CD4-positive, alpha-beta T cell (primary cell): ENCODE measurements at regions of chr6 and their contacts with region 1.

Region 1: GRCh38 chr6:42297661-42298060 is 80.0 kb upstream of the MRPS10 start:
- DNase-seq: no peak
- ATAC-seq: no peak
- H3K4me3 ChIP-seq: no peak overlapping the region
- H3K4me3 Mint-ChIP-seq: no peak overlapping the region
- H3K27ac ChIP-seq: no peak overlapping the region
- H3K27ac Mint-ChIP-seq: no peak overlapping the region
- H3K4me1 ChIP-seq: peaks cover 42% of the 10 kb centered on the region
- H3K4me1 Mint-ChIP-seq: peaks cover 59% of the 10 kb centered on the region
- H3K27me3 ChIP-seq: no peaks in the 10 kb centered on the region
- H3K27me3 Mint-ChIP-seq: no peaks in the 10 kb centered on the region
- CTCF ChIP-seq: no peak

Region 2: GRCh38 chr6:42230345-42231321 is 67.0 kb before region 1 on chr6:
- CTCF ChIA-PET with region 1: no interaction called
- POLR2A ChIA-PET with region 1: no interaction called
- intact Hi-C with region 1: no loop called
- DNase-seq: no peak
- ATAC-seq: no peak
- H3K4me3 ChIP-seq: no peak overlapping the region
- H3K4me3 Mint-ChIP-seq: no peak overlapping the region
- H3K27ac ChIP-seq: no peak overlapping the region
- H3K27ac Mint-ChIP-seq: no peak overlapping the region
- H3K4me1 ChIP-seq: no peaks in the 10 kb centered on the region
- H3K4me1 Mint-ChIP-seq: no peaks in the 10 kb centered on the region
- H3K27me3 ChIP-seq: no peaks in the 10 kb centered on the region
- H3K27me3 Mint-ChIP-seq: no peaks in the 10 kb centered on the region
- CTCF ChIP-seq: no peak

Region 3: GRCh38 chr6:42260972-42261371 is 36.7 kb before region 1 on chr6:
- CTCF ChIA-PET with region 1: no interaction called
- POLR2A ChIA-PET with region 1: no interaction called
- intact Hi-C with region 1: loop called in 1 of 2 experiments (anchors 2 kb)
- DNase-seq: peak in 13 of 14 experiments; percentile 14 to 55 (median 26)
- ATAC-seq: peak; percentile 63
- H3K4me3 ChIP-seq: no peak overlapping the region
- H3K4me3 Mint-ChIP-seq: no peak overlapping the region
- H3K27ac ChIP-seq: no peak overlapping the region
- H3K27ac Mint-ChIP-seq: no peak overlapping the region
- H3K4me1 ChIP-seq: no peaks in the 10 kb centered on the region
- H3K4me1 Mint-ChIP-seq: peaks cover 7% of the 10 kb centered on the region
- H3K27me3 ChIP-seq: no peaks in the 10 kb centered on the region
- H3K27me3 Mint-ChIP-seq: no peaks in the 10 kb centered on the region
- CTCF ChIP-seq: peak; percentile 56

Region 4: DNA sequence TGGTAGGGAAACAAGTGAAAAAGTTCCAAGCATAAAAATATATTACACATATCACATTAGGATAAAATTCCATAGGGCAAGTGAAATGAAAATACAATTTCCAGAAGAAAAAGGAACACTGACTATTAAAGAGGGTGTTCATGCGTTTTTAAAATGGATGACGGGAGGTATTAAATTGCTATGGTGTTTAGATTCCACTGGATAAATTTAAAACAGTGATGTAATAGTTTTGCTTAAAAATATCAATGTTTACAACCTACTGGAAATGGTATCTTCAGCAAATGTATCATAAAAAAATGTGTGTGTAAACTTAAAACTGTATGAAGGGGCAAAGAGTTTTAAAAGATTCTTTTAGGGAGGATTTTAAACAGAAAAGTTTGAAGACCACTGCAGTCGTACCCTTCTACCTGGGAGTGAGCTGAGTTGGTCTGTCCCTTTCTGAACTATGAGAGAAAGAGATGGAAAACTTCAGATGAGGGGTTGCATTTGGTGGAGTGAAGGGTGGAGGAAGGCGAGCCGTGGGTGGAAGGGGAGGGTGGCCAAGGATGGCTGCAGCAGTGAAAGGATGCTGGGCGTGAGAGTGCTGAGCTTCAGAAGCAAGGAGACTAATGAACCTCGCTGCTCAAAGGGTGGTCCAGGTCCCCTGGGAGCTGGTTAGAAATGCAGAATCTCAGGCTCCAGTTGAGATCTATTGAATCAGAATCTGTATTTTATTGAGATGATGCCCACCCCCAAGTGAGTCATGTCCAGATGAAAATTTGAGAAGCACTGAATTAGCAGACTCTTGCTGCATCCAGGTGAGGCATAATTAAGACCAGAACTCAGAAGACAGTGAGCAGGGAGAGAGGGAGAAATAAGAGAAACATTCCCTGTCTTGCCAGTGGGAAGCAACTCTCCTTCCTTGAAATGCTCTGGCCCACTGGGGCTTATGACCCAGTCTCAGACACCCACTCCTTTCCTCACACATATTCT is 25.5 kb before region 1 on chr6:
- CTCF ChIA-PET with region 1: no interaction called
- POLR2A ChIA-PET with region 1: no interaction called
- intact Hi-C with region 1: no loop called
- DNase-seq: no peak
- ATAC-seq: no peak
- H3K4me3 ChIP-seq: no peak overlapping the region
- H3K4me3 Mint-ChIP-seq: no peak overlapping the region
- H3K27ac ChIP-seq: no peak overlapping the region
- H3K27ac Mint-ChIP-seq: no peak overlapping the region
- H3K4me1 ChIP-seq: no peaks in the 10 kb centered on the region
- H3K4me1 Mint-ChIP-seq: peaks cover 12% of the 10 kb centered on the region
- H3K27me3 ChIP-seq: no peaks in the 10 kb centered on the region
- H3K27me3 Mint-ChIP-seq: no peaks in the 10 kb centered on the region
- CTCF ChIP-seq: no peak

Region 5: DNA sequence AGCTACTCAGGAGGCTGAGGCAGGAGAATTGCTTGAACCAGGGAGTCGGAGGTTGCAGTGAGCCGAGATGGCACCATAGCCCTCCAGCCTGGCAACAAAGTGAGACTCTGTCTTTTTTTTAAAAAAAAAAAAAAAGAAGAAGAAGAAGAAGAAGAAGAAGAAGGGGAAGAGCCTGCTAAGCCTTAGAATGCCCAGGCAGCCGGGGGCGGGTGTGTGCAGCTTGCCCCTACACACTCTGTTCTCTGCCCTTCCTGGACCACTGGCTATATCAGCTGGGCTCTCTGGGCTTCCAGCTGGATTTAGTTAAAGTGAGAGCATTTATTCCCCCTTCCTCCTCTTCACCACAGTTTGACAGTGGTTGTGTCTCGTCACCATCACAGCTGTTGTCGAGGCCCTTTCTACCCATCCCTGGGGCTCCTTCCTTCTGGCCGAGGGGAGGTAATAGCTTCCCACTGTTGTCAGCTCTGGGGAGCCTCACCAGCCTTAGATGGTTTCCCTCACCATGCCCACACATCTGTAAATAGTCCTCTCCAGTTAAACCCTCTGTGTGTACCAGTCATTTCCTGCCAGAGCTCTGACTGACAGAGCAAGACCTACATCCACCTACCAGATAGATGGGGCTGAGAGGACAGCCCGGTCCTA is 76.5 kb after region 1 on chr6:
- CTCF ChIA-PET with region 1: no interaction called
- POLR2A ChIA-PET with region 1: no interaction called
- intact Hi-C with region 1: no loop called
- DNase-seq: peak in 2 of 14 experiments; percentile 42 to 64
- ATAC-seq: peak; percentile 67
- H3K4me3 ChIP-seq: no peak overlapping the region
- H3K4me3 Mint-ChIP-seq: peak overlapping the region; percentile 55
- H3K27ac ChIP-seq: peak overlapping the region in 1 of 2 donors; percentile 3
- H3K27ac Mint-ChIP-seq: peak overlapping the region; percentile 93
- H3K4me1 ChIP-seq: peaks cover 61% of the 10 kb centered on the region
- H3K4me1 Mint-ChIP-seq: peaks cover 67% of the 10 kb centered on the region
- H3K27me3 ChIP-seq: no peaks in the 10 kb centered on the region
- H3K27me3 Mint-ChIP-seq: no peaks in the 10 kb centered on the region
- CTCF ChIP-seq: no peak

Region 6: DNA sequence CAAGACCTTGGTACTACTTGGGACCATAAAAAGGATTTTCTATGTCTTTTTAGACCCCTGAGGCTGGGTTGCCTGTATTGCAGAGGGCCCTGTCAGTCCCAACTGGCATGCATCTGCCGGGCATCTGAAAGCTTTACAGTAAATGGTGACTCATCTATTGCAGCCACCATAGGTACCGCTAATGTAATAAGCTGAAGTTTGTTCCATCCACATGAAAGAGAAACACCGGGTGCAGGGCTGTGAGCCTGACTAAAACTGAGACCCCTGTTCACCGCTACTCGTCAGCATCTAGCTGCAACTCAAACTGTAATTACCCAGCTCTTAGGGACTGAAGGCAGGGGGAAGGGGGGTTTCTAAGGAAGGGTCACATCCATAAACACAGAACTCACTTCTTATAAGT is 104.5 kb after region 1 on chr6:
- CTCF ChIA-PET with region 1: no interaction called
- POLR2A ChIA-PET with region 1: no interaction called
- intact Hi-C with region 1: no loop called
- DNase-seq: peak in 6 of 14 experiments; percentile 8 to 52 (median 48)
- ATAC-seq: peak; percentile 47
- H3K4me3 ChIP-seq: no peak overlapping the region
- H3K4me3 Mint-ChIP-seq: no peak overlapping the region
- H3K27ac ChIP-seq: no peak overlapping the region
- H3K27ac Mint-ChIP-seq: peak overlapping the region; percentile 81
- H3K4me1 ChIP-seq: peaks cover 70% of the 10 kb centered on the region
- H3K4me1 Mint-ChIP-seq: peaks cover 86% of the 10 kb centered on the region
- H3K27me3 ChIP-seq: no peaks in the 10 kb centered on the region
- H3K27me3 Mint-ChIP-seq: no peaks in the 10 kb centered on the region
- CTCF ChIP-seq: no peak